H1 (cell line): ENCODE measurements at regions of chr10 and their contacts with region 1.

Region 1: GRCh38 chr10:60208676-60209269 is 180.9 kb downstream of the ANK3 start:
- DNase-seq: no peak
- H3K4me3 ChIP-seq: no peak overlapping the region
- H3K27ac ChIP-seq: no peak overlapping the region
- H3K4me1 ChIP-seq: peaks cover 0 to 4% (median 2%) of the 10 kb centered on the region in 4 experiments; a peak in 2 of 7 replicates
- H3K27me3 ChIP-seq: no peaks in the 10 kb centered on the region
- CTCF ChIP-seq: peak in 2 of 3 experiments; percentile 64 to 79; a peak in 2 of 4 replicates
- EP300 ChIP-seq: no peak
- POLR2A ChIP-seq: no peak
- RAD21 ChIP-seq: peak; percentile 88 to 89

Region 2: DNA sequence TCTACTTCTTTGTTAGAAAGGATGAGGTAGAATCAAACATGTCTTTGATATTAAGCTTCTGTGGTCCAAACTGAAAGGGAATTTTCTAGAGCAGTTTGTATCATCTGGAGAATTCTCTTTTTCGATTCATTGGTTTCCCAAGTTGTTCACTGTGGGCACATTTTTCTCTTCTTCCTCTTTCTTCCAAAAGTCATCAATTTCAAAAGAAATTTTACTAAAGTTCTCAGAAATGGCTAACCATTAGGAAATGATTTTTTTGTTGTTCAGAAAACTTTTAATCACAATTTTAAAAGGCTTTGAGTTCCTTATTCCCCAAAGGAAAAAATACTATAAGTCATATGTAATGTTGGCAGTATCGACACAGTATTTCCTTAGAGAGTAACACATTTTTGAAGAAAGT is 274.1 kb before region 1 on chr10:
- CTCF ChIA-PET with region 1: no interaction called
- POLR2A ChIA-PET with region 1: no interaction called
- DNase-seq: no peak
- H3K4me3 ChIP-seq: no peak overlapping the region
- H3K27ac ChIP-seq: no peak overlapping the region
- H3K4me1 ChIP-seq: peaks cover 0 to 7% (median 0%) of the 10 kb centered on the region in 4 experiments; a peak in 1 of 7 replicates
- H3K27me3 ChIP-seq: no peaks in the 10 kb centered on the region
- CTCF ChIP-seq: no peak
- EP300 ChIP-seq: no peak
- POLR2A ChIP-seq: no peak
- RAD21 ChIP-seq: no peak

Region 3: GRCh38 chr10:60114765-60115586 is 93.8 kb before region 1 on chr10:
- CTCF ChIA-PET with region 1: interaction called, 151 read pairs
- POLR2A ChIA-PET with region 1: no interaction called
- DNase-seq: peak in 1 of 2 experiments; percentile 17
- H3K4me3 ChIP-seq: no peak overlapping the region
- H3K27ac ChIP-seq: no peak overlapping the region
- H3K4me1 ChIP-seq: no peaks in the 10 kb centered on the region
- H3K27me3 ChIP-seq: no peaks in the 10 kb centered on the region
- CTCF ChIP-seq: peak in 2 of 3 experiments; percentile 60 to 65; a peak in 2 of 4 replicates
- EP300 ChIP-seq: no peak
- POLR2A ChIP-seq: no peak
- RAD21 ChIP-seq: peak; percentile 73 to 77

Region 4: GRCh38 chr10:60130130-60130579 is 78.6 kb before region 1 on chr10:
- CTCF ChIA-PET with region 1: interaction called, 12 read pairs
- POLR2A ChIA-PET with region 1: no interaction called
- DNase-seq: no peak
- H3K4me3 ChIP-seq: no peak overlapping the region
- H3K27ac ChIP-seq: no peak overlapping the region
- H3K4me1 ChIP-seq: peaks cover 0 to 5% (median 0%) of the 10 kb centered on the region in 4 experiments; a peak in 2 of 7 replicates
- H3K27me3 ChIP-seq: no peaks in the 10 kb centered on the region
- CTCF ChIP-seq: no peak
- EP300 ChIP-seq: no peak
- POLR2A ChIP-seq: no peak
- RAD21 ChIP-seq: no peak

Region 5: DNA sequence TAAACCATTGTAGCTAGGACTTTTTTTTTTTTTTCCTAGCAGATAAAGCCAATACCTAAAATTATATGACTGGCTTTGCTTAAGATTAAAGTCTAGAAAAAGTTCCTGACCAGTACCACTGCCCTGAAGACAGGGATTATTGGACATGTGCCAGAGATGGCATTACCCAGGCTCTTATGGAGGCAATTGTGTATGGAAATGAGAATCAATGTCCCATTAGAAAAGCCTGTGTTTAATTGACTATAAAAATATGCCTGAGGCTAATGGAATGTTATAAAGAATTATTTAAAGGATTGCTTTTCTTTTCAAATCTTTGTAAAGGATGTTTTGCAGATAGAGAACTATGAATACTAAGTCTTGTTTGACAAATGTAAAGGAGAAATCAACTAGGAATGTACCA is 15.8 kb before region 1 on chr10:
- CTCF ChIA-PET with region 1: interaction called, 27 read pairs
- POLR2A ChIA-PET with region 1: no interaction called
- DNase-seq: no peak
- H3K4me3 ChIP-seq: no peak overlapping the region
- H3K27ac ChIP-seq: no peak overlapping the region
- H3K4me1 ChIP-seq: no peaks in the 10 kb centered on the region
- H3K27me3 ChIP-seq: no peaks in the 10 kb centered on the region
- CTCF ChIP-seq: no peak
- EP300 ChIP-seq: no peak
- POLR2A ChIP-seq: no peak
- RAD21 ChIP-seq: no peak

Region 6: DNA sequence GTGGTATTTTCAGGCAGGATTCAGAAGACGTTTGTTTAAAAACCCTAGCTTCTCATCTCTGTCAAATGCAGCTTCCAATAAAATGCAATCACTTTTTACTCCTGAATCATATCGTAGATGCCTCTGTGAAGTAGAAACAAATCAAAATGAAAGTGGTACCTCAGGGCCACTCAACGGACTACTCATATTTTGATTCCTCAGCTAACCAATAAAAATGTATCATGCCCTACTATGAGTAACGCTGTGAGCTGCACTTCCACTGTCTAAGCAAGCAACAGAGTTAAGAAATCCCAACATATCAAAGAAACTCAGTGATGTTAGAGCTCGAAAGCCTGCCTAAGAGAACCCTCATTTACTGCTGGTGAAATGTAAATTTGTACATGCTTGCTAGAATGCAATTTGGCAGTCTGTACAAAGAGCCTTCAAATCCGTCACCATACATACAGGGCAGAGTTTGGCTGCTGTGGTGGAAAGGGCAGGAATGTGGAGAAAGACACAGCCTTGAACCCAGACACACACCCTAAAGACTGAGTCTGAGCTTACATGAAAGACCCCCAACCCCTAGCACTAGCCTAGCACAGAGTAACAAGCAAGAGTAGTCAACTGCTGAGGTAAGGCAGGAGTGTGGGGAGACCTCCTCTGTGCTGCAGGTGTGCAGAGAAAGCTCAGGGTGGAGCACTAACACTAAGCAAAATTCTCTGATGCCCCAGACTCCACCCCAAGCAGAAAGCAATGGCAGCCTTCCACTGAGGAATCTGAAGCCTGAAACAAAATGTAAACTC is 29.4 kb after region 1 on chr10:
- CTCF ChIA-PET with region 1: interaction called, 11 read pairs
- POLR2A ChIA-PET with region 1: no interaction called
- DNase-seq: peak in 1 of 2 experiments; percentile 10
- H3K4me3 ChIP-seq: no peak overlapping the region
- H3K27ac ChIP-seq: no peak overlapping the region
- H3K4me1 ChIP-seq: peaks cover 0 to 3% (median 0%) of the 10 kb centered on the region in 4 experiments; a peak in 3 of 7 replicates
- H3K27me3 ChIP-seq: no peaks in the 10 kb centered on the region
- CTCF ChIP-seq: peak; percentile 62 to 75 (median 64)
- EP300 ChIP-seq: no peak
- POLR2A ChIP-seq: no peak
- RAD21 ChIP-seq: peak; percentile 85 to 87